Left ventricle myocardium superior (tissue), 1 donor: ENCODE measurements at regions of chr3 and their contacts with region 1.

Region 1: DNA sequence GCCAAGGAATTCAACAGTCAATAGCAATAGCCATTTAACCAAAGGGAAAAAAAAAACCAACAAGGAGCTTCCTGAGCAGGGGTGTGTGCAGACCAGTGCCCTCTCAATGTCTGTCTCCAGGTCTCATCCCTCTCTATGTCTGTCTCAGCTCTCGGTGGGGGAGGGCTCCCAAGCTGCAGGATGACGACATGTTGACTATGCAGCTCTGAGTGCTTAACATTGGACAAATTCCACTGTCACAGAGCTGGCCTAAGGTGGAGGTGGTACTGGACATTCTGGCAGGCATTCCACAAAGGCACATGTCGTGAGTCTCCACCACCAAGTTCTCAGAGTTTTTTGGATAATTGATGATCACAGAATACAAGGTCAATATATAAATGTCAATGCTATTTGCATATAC is 2.0 kb upstream of the CAPN7 start:
- DNase-seq: no peak
- ATAC-seq: no peak

Region 2: DNA sequence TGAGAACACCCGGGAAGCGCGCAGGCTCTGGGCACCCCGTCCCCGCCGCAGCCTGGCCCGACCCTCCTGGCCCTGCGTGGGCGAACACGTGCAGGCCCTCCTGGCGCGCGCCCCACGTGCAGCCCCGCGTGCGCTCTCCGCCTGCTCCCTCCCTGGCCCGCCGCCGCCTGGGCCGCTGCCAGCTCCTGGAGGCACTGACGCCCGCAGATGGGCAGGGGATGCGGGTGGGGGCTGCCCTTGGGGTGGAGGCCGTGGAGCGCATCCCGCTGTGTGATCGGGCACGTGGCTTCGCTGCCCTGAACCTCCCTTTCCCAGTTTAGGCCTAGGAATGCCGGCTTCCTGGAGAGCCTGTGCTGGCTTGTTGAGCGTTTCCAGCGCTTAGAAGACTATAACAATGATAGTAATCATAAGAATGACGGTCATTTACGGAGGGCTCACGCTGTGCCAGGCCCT is 906.2 kb before region 1 on chr3:
- intact Hi-C with region 1: no loop called
- DNase-seq: peak; percentile 66
- ATAC-seq: peak; percentile 66

Region 3: GRCh38 chr3:15042936-15043335 is 161.1 kb before region 1 on chr3:
- intact Hi-C with region 1: no loop called
- DNase-seq: no peak
- ATAC-seq: no peak

Region 4: DNA sequence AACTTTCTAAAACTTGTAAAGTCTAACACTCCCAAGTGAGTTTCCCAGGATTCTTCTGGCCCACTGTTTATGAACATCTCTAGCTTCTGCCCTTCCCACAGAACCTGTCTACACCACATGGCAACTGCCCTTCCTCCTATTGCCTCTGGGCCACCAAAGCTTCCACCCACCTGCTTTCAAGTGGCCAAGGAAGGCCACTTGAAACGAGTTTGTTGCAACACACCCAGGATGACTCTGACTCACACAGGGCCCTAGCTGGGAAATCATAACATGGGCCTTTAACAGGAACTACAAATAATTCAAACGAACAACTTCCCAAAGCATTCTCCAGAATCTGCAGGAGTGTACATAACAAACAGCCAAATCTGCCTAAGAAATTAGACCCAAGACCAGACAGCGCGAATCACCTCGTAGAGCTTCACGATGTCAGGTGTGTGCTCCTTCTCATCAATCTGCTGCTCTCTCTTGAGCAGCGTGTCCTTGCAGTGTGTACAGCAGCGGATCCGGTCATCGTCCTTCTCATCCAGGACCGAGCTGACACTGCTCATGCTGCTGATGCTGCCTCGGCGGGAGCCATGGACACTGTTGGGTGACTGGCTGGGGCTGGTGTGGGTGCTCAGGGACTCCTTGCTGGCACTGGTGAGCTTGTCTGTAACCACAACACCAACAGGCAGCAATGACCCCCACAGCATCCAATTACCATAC is 121.9 kb before region 1 on chr3:
- intact Hi-C with region 1: no loop called
- DNase-seq: no peak
- ATAC-seq: no peak

Region 5: GRCh38 chr3:15405448-15406050 is 201.5 kb after region 1 on chr3:
- intact Hi-C with region 1: loop called (anchors 5 kb)
- DNase-seq: no peak
- ATAC-seq: peak; percentile 65